Activated CD4-positive, alpha-beta T cell treated with anti-CD3 and anti-CD28 coated beads for 36 hours (primary cell): ENCODE measurements at regions of chr1 and their contacts with region 1.

Region 1: GRCh38 chr1:223474804-223475203 is 81.6 kb downstream of the CCDC185 start:
- DNase-seq: peak; percentile 24
- ATAC-seq: no peak
- H3K4me3 Mint-ChIP-seq: no peak overlapping the region
- H3K27ac Mint-ChIP-seq: no peak overlapping the region
- H3K4me1 Mint-ChIP-seq: no peaks in the 10 kb centered on the region
- H3K27me3 Mint-ChIP-seq: peaks cover 9% of the 10 kb centered on the region

Region 2: GRCh38 chr1:223460566-223461189 is 14.1 kb before region 1 on chr1:
- CTCF ChIA-PET with region 1: interaction called, 3 read pairs
- POLR2A ChIA-PET with region 1: interaction called, 10 read pairs
- intact Hi-C with region 1: no loop called
- DNase-seq: no peak
- ATAC-seq: no peak
- H3K4me3 Mint-ChIP-seq: no peak overlapping the region
- H3K27ac Mint-ChIP-seq: no peak overlapping the region
- H3K4me1 Mint-ChIP-seq: no peaks in the 10 kb centered on the region
- H3K27me3 Mint-ChIP-seq: no peaks in the 10 kb centered on the region